ENCODE measurements at regions of chr14 and their contacts with region 1.

Region 1: GRCh38 chr14:34668111-34668510 is 38.2 kb upstream of the SNX6 start:
- DNase-seq: no peak
- H3K4me3 ChIP-seq: no peak overlapping the region
- H3K27ac ChIP-seq: no peak overlapping the region
- H3K4me1 ChIP-seq: peaks cover 0 to 19% of the 10 kb centered on the region in 2 experiments; a peak in 3 of 4 replicates
- H3K27me3 ChIP-seq: no peaks in the 10 kb centered on the region
- CTCF ChIP-seq: no peak
- EP300 ChIP-seq: no peak
- RAD21 ChIP-seq: no peak

Region 2: DNA sequence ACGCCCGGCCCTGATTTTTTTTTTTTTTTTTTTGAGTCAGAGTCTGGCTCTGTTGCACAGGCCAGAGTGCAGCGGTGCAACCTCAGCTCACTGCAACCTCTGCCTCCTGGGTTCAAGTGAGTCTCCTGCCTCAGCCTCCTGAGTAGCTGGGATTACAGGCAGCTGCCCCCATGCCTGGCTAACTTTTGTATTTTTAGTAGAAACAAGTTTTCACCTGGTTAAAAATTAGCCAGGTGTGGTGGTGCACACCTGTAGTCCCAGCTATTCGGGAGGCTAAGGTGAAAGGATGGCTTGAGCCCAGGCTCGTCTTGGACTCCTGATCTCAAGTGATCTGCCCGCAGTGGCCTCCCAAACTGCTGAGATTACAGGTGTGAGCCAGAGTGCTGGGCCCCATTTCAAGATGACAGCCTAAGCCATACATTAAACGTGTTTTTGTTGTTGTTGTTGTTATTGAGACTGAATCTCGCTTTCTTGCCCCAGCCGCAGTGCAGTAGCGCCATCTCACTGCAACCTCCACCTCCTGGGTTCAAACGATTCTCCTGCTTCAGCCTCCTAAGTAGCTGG is 85.9 kb before region 1 on chr14:
- CTCF ChIA-PET with region 1: no interaction called
- POLR2A ChIA-PET with region 1: no interaction called
- DNase-seq: no peak
- H3K4me3 ChIP-seq: no peak overlapping the region
- H3K27ac ChIP-seq: no peak overlapping the region
- H3K4me1 ChIP-seq: no peaks in the 10 kb centered on the region
- H3K27me3 ChIP-seq: no peaks in the 10 kb centered on the region
- CTCF ChIP-seq: no peak
- EP300 ChIP-seq: no peak
- RAD21 ChIP-seq: no peak

Region 3: GRCh38 chr14:34714320-34715126 is 46.4 kb after region 1 on chr14 and contains the start of gene CFL2:
- CTCF ChIA-PET with region 1: interaction called, 24 read pairs
- POLR2A ChIA-PET with region 1: no interaction called
- DNase-seq: peak; percentile 97
- H3K4me3 ChIP-seq: peak within 1 kb of the TSS; percentile 68 to 83
- H3K27ac ChIP-seq: peak within 1 kb of the TSS; percentile 90 to 91
- H3K4me1 ChIP-seq: peaks cover 27 to 29% of the 10 kb centered on the region in 2 experiments
- H3K27me3 ChIP-seq: no peaks in the 10 kb centered on the region
- CTCF ChIP-seq: no peak
- EP300 ChIP-seq: 0 out of 4 replicates have a peak, but pooled peaks of 1 of the 2 experiments have one; percentile 35
- RAD21 ChIP-seq: no peak
- polyA plus RNA-seq, gene CFL2: 48.1 and 60.9 TPM in 2 replicates